ENCODE measurements at regions of chr3 and their contacts with region 1.

Region 1: DNA sequence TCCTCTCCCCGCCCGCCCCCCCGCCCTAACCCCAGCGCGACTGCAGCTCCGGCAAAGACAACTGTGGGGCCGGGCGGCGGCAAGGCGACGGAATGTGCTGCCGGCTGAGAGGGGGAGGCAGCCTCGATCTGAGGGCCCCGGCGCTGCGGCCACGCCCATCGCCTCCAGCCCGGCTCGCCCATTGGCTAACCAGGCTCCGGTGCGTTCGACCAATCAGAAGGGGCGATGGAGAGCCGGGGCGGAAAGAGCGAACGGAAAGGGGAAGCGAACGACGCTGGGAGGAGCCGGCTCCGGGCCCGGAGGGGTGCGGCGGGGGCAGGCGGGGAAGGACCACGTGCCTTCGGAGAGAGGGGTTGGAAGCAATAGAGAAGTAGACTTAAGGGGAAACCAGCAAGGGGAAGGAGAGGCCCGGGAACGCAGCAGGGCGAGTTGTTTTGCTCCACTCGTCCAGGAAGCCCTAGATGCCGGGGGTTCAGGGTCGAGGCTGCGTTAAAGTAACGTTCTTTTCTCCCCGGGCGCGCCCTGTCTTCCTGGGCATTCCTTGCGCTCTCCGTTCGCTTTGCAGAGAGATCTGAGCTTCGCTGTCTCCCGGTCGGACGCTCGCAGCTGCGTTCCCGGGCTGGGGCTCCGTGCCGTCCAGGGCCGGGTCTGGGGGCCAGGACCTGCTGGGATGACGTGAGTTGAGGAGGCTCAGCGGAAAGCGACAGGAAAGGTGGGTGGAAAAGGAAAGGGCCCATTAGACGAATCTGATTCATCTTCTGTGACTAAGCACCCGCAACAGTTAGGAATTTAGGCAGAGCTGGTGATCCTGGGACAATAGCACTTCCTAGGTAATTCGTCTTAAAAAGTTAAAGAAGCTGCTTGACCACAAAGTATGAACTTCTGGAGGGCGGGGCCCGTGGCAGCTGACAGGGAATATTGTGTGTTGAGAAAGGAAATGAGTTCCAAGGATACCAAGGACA is at the start of gene KPNA4:
- DNase-seq: peak; percentile 98
- H3K4me3 Mint-ChIP-seq: peak within 1 kb of the TSS; percentile 96
- H3K27ac Mint-ChIP-seq: peak within 1 kb of the TSS; percentile 99
- H3K4me1 Mint-ChIP-seq: peaks cover 30% of the 10 kb centered on the region
- H3K27me3 Mint-ChIP-seq: no peaks in the 10 kb centered on the region
- CTCF ChIP-seq: no peak
- total RNA-seq, gene KPNA4: 85.9 and 127 TPM in 2 replicates

Region 2: DNA sequence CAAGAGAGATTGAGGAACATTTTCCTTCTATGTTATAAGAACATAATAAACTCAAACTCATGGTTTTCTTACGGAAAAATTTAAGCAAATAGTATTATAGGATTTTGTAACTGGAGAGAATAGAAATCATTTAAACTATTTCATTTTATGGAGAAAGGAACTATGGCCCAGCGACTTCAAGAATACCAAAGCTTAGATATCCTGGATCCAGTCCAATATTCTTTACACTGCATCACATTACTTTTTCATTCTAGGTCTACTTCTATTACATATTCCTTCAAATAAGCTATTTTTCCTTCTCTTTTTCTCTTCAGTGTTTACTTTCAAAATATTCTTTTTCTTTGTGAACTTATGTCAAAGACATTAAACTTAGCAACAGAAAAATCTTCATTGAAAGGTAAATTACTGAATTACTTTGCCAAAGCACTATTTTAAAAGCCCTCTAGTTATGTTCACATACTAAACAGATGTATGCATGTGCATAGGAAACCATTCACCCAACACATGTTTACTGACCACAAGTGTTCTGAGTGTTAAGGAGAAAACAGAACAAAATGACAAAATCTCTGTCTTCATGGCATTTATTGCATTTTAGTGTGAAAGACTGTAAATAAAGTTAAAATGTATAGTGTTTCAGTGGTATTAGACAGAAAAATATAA is 20.7 kb before region 1 on chr3:
- CTCF ChIA-PET with region 1: no interaction called
- POLR2A ChIA-PET with region 1: interaction called, 17 read pairs
- intact Hi-C with region 1: no loop called
- DNase-seq: no peak
- H3K4me3 Mint-ChIP-seq: no peak overlapping the region
- H3K27ac Mint-ChIP-seq: no peak overlapping the region
- H3K4me1 Mint-ChIP-seq: peaks cover 43% of the 10 kb centered on the region
- H3K27me3 Mint-ChIP-seq: no peaks in the 10 kb centered on the region
- CTCF ChIP-seq: no peak

Region 3: DNA sequence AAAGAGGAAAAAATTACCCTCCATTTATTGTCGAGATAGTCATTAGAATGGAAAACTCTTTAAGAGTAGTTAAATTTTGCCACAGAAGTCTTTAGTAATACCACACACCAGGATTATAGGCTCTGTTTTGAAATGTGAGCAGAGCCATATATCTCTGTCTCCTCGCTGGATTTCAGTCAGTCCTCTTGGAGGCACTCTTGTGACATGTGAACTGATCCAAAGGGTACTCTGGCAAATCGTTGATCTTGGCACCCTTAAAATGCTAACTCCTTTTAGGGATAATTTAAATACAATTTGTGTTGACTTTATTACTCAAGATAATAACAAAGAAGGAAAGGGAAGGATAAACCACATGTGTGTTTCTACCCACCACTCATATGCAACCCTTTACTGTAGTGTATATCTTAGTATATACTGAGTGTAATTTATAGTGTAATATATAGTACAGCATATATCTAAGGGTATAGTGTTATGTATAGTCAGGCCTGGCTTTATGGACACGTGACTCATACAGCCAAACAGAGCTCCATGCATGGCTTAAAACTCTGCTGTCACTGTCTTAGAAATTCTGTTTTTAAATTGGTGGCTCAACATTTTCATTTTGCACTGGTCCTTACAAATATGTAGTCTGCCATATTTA is 12.0 kb after region 1 on chr3:
- CTCF ChIA-PET with region 1: interaction called, 3 read pairs
- POLR2A ChIA-PET with region 1: interaction called, 23 read pairs
- intact Hi-C with region 1: no loop called
- DNase-seq: peak; percentile 63
- H3K4me3 Mint-ChIP-seq: no peak overlapping the region
- H3K27ac Mint-ChIP-seq: no peak overlapping the region
- H3K4me1 Mint-ChIP-seq: no peaks in the 10 kb centered on the region
- H3K27me3 Mint-ChIP-seq: no peaks in the 10 kb centered on the region
- CTCF ChIP-seq: no peak

Region 4: DNA sequence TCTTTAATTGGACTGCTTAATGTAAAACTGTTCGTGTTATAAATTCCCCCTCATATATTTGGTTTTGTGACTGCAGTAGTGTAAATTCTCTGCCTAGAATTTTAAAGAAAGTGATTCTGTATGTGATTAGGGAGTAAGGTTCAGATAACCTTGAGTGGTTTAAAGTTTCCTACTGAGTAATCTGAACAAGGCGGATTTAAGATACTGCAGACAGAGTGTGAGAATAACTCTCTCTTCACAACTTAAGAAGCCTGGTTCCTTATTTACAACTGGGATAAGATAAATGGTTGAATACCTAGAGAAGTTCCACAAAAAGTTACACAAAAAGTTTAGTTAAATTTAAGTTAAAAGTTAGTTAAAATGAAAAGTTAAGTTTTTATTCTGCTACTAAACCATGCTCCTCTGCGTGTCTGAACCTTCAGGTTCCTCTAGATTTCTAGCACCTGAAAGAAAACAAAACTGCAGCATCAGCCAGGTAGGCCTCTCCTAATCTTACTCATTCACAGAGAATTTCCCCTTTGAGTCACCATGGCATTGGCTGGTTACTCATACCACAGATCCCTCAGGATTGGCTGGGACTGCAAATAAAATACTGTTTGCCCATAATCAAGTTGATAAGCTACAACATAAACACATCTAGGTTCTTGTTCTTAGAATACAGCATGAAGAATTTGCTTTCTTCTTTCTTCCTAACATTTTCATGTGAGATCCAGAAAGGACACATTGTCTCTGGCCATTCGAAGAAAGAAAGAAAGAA is 111.0 kb after region 1 on chr3 and contains the start of gene ARL14:
- CTCF ChIA-PET with region 1: interaction called, 6 read pairs
- POLR2A ChIA-PET with region 1: interaction called, 124 read pairs
- intact Hi-C with region 1: loop called (anchors 5 kb)
- DNase-seq: peak; percentile 91
- H3K4me3 Mint-ChIP-seq: peak within 1 kb of the TSS; percentile 71
- H3K27ac Mint-ChIP-seq: peak within 1 kb of the TSS; percentile 95
- H3K4me1 Mint-ChIP-seq: peaks cover 36% of the 10 kb centered on the region
- H3K27me3 Mint-ChIP-seq: no peaks in the 10 kb centered on the region
- CTCF ChIP-seq: no peak
- total RNA-seq, gene ARL14: 0.72 and 1.1 TPM in 2 replicates

Region 5: GRCh38 chr3:160999276-160999675 is 433.6 kb after region 1 on chr3:
- CTCF ChIA-PET with region 1: no interaction called
- POLR2A ChIA-PET with region 1: no interaction called
- intact Hi-C with region 1: no loop called
- DNase-seq: peak; percentile 24
- H3K4me3 Mint-ChIP-seq: no peak overlapping the region
- H3K27ac Mint-ChIP-seq: no peak overlapping the region
- H3K4me1 Mint-ChIP-seq: no peaks in the 10 kb centered on the region
- H3K27me3 Mint-ChIP-seq: no peaks in the 10 kb centered on the region
- CTCF ChIP-seq: no peak